Ascending aorta (tissue), 2 donors: ENCODE measurements at regions of chr10 and their contacts with region 1.

Region 1: GRCh38 chr10:17062955-17063484 is 66.6 kb downstream of the CUBN start:
- DNase-seq: peak; percentile 35 to 91
- H3K4me3 ChIP-seq: peak overlapping the region in 1 of 2 donors; percentile 16
- H3K27ac ChIP-seq: peak overlapping the region; percentile 79 to 85
- H3K4me1 ChIP-seq: peaks cover 6 to 32% of the 10 kb centered on the region in 2 donors
- H3K27me3 ChIP-seq: no peaks in the 10 kb centered on the region
- CTCF ChIP-seq: no peak

Region 2: GRCh38 chr10:16975188-16975587 is 87.8 kb before region 1 on chr10:
- intact Hi-C with region 1: no loop called
- DNase-seq: no peak
- H3K4me3 ChIP-seq: no peak overlapping the region
- H3K27ac ChIP-seq: no peak overlapping the region
- H3K4me1 ChIP-seq: no peaks in the 10 kb centered on the region
- H3K27me3 ChIP-seq: no peaks in the 10 kb centered on the region
- CTCF ChIP-seq: no peak

Region 3: GRCh38 chr10:17029581-17030271 is 33.3 kb before region 1 on chr10:
- intact Hi-C with region 1: loop called (anchors 5 kb)
- DNase-seq: peak; percentile 23 to 84
- H3K4me3 ChIP-seq: peak overlapping the region in 1 of 2 donors; percentile 9
- H3K27ac ChIP-seq: peak overlapping the region in 1 of 2 donors; percentile 21
- H3K4me1 ChIP-seq: peaks cover 0 to 21% of the 10 kb centered on the region in 2 donors
- H3K27me3 ChIP-seq: no peaks in the 10 kb centered on the region
- CTCF ChIP-seq: no peak